Prostate gland (tissue), 2 donors: ENCODE measurements at regions of chr14 and their contacts with region 1.

Region 1: DNA sequence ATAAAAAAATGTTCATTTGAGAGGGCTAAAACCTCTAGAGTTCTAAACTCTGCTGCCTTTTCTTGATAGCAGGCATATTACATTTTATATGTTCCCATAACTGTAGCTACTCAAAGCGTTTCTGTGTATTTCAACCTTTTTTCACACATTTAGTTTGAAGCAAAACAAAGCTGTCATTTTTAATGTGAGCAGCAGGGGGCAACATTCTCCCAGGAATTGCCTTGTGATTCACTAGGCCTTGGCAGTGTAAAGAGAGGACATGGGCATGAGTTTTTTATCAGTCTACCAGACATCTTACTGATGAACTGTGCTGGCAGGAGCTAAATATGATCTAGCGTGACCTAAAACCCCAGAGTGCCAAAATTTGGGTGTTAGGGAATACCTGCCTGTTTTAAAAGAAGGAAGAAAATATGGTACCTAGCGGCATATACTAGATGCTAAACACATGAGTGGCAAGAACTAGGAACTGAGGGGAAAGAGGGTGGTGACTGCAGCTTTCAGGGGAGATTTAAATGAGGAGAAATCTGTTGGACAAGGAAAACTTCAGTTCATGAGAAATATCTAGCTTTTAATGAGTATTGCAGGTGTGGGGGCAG is 65.3 kb downstream of the IFT43 start:
- DNase-seq: peak; percentile 38
- H3K4me3 ChIP-seq: no peak overlapping the region
- H3K27ac ChIP-seq: no peak overlapping the region
- H3K4me1 ChIP-seq: no peaks in the 10 kb centered on the region
- H3K27me3 ChIP-seq: no peaks in the 10 kb centered on the region
- CTCF ChIP-seq: peak; percentile 64 to 81 (median 74)
- POLR2A ChIP-seq: no peak

Region 2: DNA sequence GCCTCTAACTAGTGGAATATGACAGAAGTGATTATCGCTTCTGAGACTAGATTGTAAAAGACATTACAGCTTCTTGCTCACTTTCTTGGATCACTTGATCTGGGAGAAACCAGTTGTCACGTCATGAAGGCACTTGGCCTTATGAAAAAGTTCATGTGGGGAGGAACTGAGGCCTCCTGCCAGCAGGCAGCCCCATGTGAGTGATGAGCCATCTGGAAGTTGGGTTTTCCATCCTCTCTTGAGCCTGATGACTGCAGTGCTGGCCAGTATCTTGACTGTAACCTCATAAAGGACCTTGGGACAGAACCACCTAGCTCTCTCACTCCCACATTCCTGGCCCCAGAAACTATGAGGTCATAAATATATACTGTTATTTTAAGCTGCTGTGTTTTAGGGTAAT is 361.9 kb before region 1 on chr14:
- intact Hi-C with region 1: no loop called
- DNase-seq: no peak
- H3K4me3 ChIP-seq: no peak overlapping the region
- H3K27ac ChIP-seq: no peak overlapping the region
- H3K4me1 ChIP-seq: no peaks in the 10 kb centered on the region
- H3K27me3 ChIP-seq: no peaks in the 10 kb centered on the region
- CTCF ChIP-seq: no peak
- POLR2A ChIP-seq: no peak

Region 3: GRCh38 chr14:76090616-76091391 is 39.9 kb after region 1 on chr14:
- intact Hi-C with region 1: loop called (anchors 5 kb)
- DNase-seq: peak; percentile 8
- H3K4me3 ChIP-seq: no peak overlapping the region
- H3K27ac ChIP-seq: peak overlapping the region; percentile 44 to 49
- H3K4me1 ChIP-seq: no peaks in the 10 kb centered on the region
- H3K27me3 ChIP-seq: no peaks in the 10 kb centered on the region
- CTCF ChIP-seq: peak in 1 of 4 experiments; percentile 25
- POLR2A ChIP-seq: no peak

Region 4: DNA sequence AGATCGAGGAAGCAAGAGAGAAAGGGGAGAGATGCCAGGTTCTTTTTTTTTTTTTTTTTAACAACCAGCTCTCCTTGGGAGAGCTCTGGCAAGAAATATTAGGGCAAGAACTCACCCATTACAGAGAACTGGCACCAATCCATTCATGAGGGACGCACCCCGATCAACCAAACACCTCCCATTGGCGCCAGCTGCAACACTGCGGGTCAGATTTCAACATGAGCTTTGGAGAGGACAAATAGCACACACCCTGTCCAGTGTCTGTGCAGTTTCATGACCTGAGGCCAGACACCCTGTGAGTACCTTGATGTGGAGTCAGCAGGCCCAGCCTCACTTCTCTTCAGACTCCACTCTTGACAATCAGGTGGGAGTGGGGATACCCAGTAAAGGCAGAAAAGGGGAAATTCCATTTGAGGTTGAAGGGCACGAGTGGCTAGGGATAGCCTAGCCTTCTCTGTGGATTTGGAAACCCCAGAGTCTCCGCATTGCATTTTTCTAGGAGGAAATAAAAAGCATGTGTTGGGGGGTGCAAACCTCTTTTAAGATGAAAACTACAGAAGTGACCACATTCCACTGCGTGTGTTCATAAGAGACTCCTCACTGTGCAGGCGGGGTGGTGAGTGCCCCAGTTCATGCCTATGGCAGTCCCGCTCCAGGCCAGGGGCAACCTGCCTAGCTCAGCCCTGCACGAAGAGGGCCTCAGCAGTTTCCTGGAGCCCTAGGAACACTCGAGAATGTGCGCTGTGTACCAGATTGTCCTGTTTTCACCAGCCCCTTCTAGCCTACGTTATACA is 58.4 kb after region 1 on chr14:
- intact Hi-C with region 1: no loop called
- DNase-seq: no peak
- H3K4me3 ChIP-seq: no peak overlapping the region
- H3K27ac ChIP-seq: peak overlapping the region in 1 of 2 donors; percentile 31
- H3K4me1 ChIP-seq: no peaks in the 10 kb centered on the region
- H3K27me3 ChIP-seq: no peaks in the 10 kb centered on the region
- CTCF ChIP-seq: no peak
- POLR2A ChIP-seq: no peak

Region 5: GRCh38 chr14:76352639-76353281 is 301.9 kb after region 1 on chr14:
- intact Hi-C with region 1: loop called (anchors 2 kb)
- DNase-seq: peak; percentile 20
- H3K4me3 ChIP-seq: peak overlapping the region in 1 of 2 donors; percentile 16
- H3K27ac ChIP-seq: no peak overlapping the region
- H3K4me1 ChIP-seq: no peaks in the 10 kb centered on the region
- H3K27me3 ChIP-seq: no peaks in the 10 kb centered on the region
- CTCF ChIP-seq: peak; percentile 54 to 79 (median 73)
- POLR2A ChIP-seq: no peak

Region 6: GRCh38 chr14:76647697-76648298 is 596.9 kb after region 1 on chr14:
- intact Hi-C with region 1: loop called (anchors 5 kb)
- DNase-seq: peak; percentile 23
- H3K4me3 ChIP-seq: no peak overlapping the region
- H3K27ac ChIP-seq: no peak overlapping the region
- H3K4me1 ChIP-seq: no peaks in the 10 kb centered on the region
- H3K27me3 ChIP-seq: no peaks in the 10 kb centered on the region
- CTCF ChIP-seq: peak; percentile 42 to 69 (median 58)
- POLR2A ChIP-seq: no peak